ENCODE measurements at regions of chr2 and their contacts with region 1.

Region 1: GRCh38 chr2:64865073-64865830 is 123.9 kb upstream of the SLC1A4 start:
- DNase-seq: no peak
- H3K4me3 ChIP-seq: peak overlapping the region; percentile 40 to 83 (median 61)
- H3K27ac ChIP-seq: peak overlapping the region; percentile 91 to 96 (median 91)
- H3K4me1 ChIP-seq: peaks cover 11 to 69% (median 24%) of the 10 kb centered on the region in 3 donors
- H3K27me3 ChIP-seq: no peaks in the 10 kb centered on the region
- CTCF ChIP-seq: peak in 5 of 6 experiments; percentile 38 to 100 (median 99)
- POLR2A ChIP-seq: no peak

Region 2: GRCh38 chr2:64594226-64594989 is 270.8 kb before region 1 on chr2:
- intact Hi-C with region 1: loop called (anchors 5 kb)
- DNase-seq: no peak
- H3K4me3 ChIP-seq: no peak overlapping the region
- H3K27ac ChIP-seq: peak overlapping the region in 3 of 4 donors; percentile 4 to 69 (median 45)
- H3K4me1 ChIP-seq: peaks cover 0 to 40% (median 0%) of the 10 kb centered on the region in 3 donors
- H3K27me3 ChIP-seq: no peaks in the 10 kb centered on the region
- CTCF ChIP-seq: no peak
- POLR2A ChIP-seq: no peak

Region 3: GRCh38 chr2:64922482-64923384 is 57.5 kb after region 1 on chr2:
- intact Hi-C with region 1: no loop called
- DNase-seq: no peak
- H3K4me3 ChIP-seq: no peak overlapping the region
- H3K27ac ChIP-seq: no peak overlapping the region
- H3K4me1 ChIP-seq: peaks cover 0 to 10% (median 4%) of the 10 kb centered on the region in 3 donors
- H3K27me3 ChIP-seq: no peaks in the 10 kb centered on the region
- CTCF ChIP-seq: no peak
- POLR2A ChIP-seq: no peak